SK-N-SH (cell line): ENCODE measurements at regions of chr10 and their contacts with region 1.

Region 1: DNA sequence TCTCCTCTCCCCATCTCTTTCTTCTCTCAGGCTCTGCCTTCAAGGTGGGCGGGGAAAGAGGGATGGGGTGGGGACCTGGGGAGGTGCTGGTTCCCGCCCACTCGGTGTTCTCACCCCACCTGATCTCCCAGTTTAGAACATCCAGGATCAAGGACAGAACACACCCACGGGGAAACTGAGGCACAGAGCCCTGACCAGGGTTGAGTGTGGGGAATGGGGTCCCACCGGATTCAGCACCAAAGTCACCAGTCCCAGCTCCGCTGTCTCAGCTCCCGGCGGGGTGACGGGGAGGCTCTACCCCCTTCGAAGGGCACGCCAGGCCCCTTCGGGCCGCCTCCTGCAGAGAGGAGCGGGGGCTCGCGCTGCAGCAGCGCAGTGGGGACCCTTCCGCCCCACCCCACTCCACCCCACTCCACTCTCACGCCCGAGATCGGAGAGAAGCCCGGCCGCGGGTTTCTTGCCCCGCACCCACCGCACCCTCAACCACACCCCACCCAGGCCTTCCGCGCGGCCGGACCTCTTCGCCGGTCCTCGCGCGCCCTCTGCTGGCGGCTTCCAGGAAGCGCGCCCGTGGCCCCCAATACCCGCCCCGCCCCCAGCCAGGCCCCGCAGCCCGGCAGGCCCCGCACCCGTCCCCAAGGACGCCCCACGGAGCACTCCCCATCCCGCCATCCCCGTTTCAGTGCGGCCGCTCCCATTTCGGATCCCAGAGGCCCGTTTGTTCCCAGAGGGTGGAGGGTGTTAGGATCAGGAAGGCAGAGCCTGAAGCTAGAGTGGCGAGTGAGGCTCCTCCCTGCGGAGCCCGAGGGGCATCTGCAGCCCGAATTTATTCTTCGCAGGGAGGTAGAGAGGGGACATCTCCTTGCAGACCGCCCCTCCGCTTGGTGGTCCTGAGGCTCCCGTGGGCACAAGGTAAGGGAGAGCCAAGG is 18.0 kb downstream of the POLL start:
- DNase-seq: peak; percentile 98
- H3K4me3 ChIP-seq: peak overlapping the region; percentile 66 to 70
- H3K27ac ChIP-seq: peak overlapping the region in 1 of 2 experiments; percentile 56; a peak in 1 of 4 replicates
- H3K4me1 ChIP-seq: peaks cover 0 to 29% of the 10 kb centered on the region in 2 experiments; a peak in 1 of 4 replicates
- H3K27me3 ChIP-seq: no peaks in the 10 kb centered on the region; the same call in 1 of the 2 replicates
- CTCF ChIP-seq: peak; percentile 69
- EP300 ChIP-seq: no peak
- RAD21 ChIP-seq: peak; percentile 76

Region 2: GRCh38 chr10:101272229-101272868 is 297.8 kb before region 1 on chr10:
- CTCF ChIA-PET with region 1: interaction called, 25 read pairs
- POLR2A ChIA-PET with region 1: no interaction called
- DNase-seq: peak; percentile 83
- H3K4me3 ChIP-seq: no peak overlapping the region
- H3K27ac ChIP-seq: no peak overlapping the region
- H3K4me1 ChIP-seq: no peaks in the 10 kb centered on the region; a peak in 1 of 4 replicates
- H3K27me3 ChIP-seq: peaks cover 8% of the 10 kb centered on the region; the same call in 1 of the 2 replicates
- CTCF ChIP-seq: peak; percentile 76
- EP300 ChIP-seq: no peak
- RAD21 ChIP-seq: peak; percentile 66

Region 3: DNA sequence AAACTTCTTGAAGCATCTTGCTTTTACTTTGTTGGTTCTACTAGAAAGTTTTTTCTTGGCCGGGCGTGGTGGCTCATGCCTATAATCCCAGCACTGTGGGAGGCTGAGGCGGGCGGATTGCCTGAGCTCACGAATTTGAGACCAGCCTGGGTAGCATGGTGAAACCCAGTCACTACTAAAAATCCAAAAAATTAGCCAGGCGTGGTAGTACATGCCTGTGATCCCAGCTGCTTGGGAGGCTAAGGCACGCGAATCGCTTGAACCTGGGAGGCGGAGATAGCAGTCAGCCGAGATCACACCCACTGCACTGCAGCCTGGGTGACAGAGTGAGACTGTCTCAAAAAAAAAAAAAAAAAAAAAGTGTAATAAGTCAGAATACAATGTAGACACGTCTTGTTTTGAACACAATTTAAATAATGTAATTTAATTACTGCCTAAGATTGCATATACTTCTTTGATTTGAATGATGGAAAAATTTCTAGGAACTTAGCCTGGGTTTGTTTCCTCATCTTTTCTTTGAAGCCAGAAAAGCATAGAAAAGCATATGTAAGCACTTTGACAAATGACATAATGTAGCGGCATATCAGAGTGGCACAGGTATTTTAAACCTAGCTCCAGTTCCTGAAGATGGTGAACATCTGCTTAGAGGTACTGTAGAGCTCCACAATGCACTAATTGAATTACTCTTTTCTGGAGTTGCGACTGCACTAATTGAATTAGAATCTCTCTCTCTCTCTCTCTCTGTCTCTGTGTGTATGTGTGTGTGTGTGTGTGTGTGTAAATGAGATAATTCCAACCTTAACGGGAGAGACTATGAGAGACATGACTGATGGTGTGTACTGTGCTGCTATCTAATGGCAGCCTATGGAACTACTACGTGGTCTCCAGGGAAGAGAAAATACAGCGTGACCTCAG is 128.3 kb before region 1 on chr10:
- CTCF ChIA-PET with region 1: interaction called, 16 read pairs
- POLR2A ChIA-PET with region 1: no interaction called
- DNase-seq: peak; percentile 65
- H3K4me3 ChIP-seq: no peak overlapping the region
- H3K27ac ChIP-seq: no peak overlapping the region
- H3K4me1 ChIP-seq: peaks cover 0 to 9% of the 10 kb centered on the region in 2 experiments; a peak in 2 of 4 replicates
- H3K27me3 ChIP-seq: no peaks in the 10 kb centered on the region
- CTCF ChIP-seq: peak; percentile 68
- EP300 ChIP-seq: no peak
- RAD21 ChIP-seq: peak; percentile 90

Region 4: GRCh38 chr10:101485681-101486554 is 84.2 kb before region 1 on chr10:
- CTCF ChIA-PET with region 1: interaction called, 33 read pairs
- POLR2A ChIA-PET with region 1: no interaction called
- DNase-seq: peak; percentile 51
- H3K4me3 ChIP-seq: peak overlapping the region in 1 of 2 experiments; percentile 42; a peak in 2 of 4 replicates
- H3K27ac ChIP-seq: peak overlapping the region in 1 of 2 experiments; percentile 43; a peak in 2 of 4 replicates
- H3K4me1 ChIP-seq: peaks cover 6 to 16% of the 10 kb centered on the region in 2 experiments; a peak in 3 of 4 replicates
- H3K27me3 ChIP-seq: no peaks in the 10 kb centered on the region
- CTCF ChIP-seq: no peak
- EP300 ChIP-seq: no peak; a peak in 1 of 4 replicates
- RAD21 ChIP-seq: no peak

Region 5: DNA sequence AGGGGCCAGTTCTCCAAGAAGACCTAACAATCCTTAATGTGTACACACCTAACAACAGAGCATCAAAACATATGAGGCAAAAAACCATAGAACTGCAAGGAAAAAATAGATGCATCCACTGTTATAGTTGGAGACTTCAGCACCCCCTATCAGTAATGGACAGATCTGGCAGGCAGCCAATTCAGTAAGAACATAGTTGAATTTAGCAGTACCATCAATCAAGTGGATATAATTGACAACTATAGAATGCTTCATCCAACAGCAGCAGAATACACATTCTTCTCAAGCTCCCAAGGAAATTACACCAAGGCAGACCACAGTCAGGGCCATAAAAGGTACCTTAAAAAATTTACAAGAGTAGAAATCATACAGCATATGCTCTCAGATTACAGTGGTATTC is 24.2 kb before region 1 on chr10:
- CTCF ChIA-PET with region 1: interaction called, 13 read pairs
- POLR2A ChIA-PET with region 1: interaction called, 4 read pairs
- DNase-seq: peak; percentile 32
- H3K4me3 ChIP-seq: no peak overlapping the region
- H3K27ac ChIP-seq: no peak overlapping the region
- H3K4me1 ChIP-seq: no peaks in the 10 kb centered on the region
- H3K27me3 ChIP-seq: no peaks in the 10 kb centered on the region
- CTCF ChIP-seq: no peak
- EP300 ChIP-seq: no peak
- RAD21 ChIP-seq: no peak

Region 6: DNA sequence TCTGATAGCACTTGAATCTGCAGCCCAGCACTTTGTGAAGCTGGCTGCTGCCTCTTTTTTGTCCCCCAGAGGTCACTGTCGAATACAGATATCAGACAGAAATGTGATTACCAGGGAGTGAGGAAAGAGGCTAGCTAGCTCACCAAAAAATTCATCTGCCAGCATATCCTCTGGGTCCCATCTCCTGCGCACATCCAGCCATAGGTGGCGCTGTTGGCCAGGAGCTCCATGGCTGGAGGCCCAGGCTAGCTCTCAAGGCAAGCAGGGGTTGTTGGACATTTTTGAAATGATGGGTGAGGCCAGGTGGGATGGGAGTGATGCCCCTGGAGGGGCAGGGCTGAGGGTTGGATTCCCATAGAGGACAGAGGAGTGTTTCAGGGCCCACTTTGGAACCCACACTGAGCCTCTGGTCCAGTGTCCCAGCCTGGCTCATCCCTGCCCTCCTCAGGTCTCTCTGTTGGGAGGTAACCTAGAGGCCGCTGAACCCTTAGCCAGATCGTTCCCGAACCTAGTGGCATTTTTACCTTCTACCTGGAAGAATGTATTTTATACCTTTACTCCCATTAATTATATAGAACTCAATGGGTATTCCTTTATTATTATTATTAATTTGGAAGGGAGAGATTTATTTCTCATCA is 32.8 kb after region 1 on chr10:
- CTCF ChIA-PET with region 1: interaction called, 10 read pairs
- POLR2A ChIA-PET with region 1: no interaction called
- DNase-seq: peak; percentile 84
- H3K4me3 ChIP-seq: peak overlapping the region in 1 of 2 experiments; percentile 24; a peak in 1 of 4 replicates
- H3K27ac ChIP-seq: no peak overlapping the region; a peak in 1 of 4 replicates
- H3K4me1 ChIP-seq: no peaks in the 10 kb centered on the region; a peak in 1 of 4 replicates
- H3K27me3 ChIP-seq: no peaks in the 10 kb centered on the region
- CTCF ChIP-seq: peak; percentile 90
- EP300 ChIP-seq: no peak
- RAD21 ChIP-seq: peak; percentile 92

Region 7: GRCh38 chr10:101629837-101630632 is 59.9 kb after region 1 on chr10:
- CTCF ChIA-PET with region 1: no interaction called
- POLR2A ChIA-PET with region 1: no interaction called
- DNase-seq: no peak
- H3K4me3 ChIP-seq: no peak overlapping the region
- H3K27ac ChIP-seq: no peak overlapping the region
- H3K4me1 ChIP-seq: peaks cover 0 to 6% of the 10 kb centered on the region in 2 experiments; a peak in 1 of 4 replicates
- H3K27me3 ChIP-seq: no peaks in the 10 kb centered on the region
- CTCF ChIP-seq: no peak
- EP300 ChIP-seq: no peak
- RAD21 ChIP-seq: no peak